ENCODE measurements at regions of chr19 and their contacts with region 1.

Region 1: DNA sequence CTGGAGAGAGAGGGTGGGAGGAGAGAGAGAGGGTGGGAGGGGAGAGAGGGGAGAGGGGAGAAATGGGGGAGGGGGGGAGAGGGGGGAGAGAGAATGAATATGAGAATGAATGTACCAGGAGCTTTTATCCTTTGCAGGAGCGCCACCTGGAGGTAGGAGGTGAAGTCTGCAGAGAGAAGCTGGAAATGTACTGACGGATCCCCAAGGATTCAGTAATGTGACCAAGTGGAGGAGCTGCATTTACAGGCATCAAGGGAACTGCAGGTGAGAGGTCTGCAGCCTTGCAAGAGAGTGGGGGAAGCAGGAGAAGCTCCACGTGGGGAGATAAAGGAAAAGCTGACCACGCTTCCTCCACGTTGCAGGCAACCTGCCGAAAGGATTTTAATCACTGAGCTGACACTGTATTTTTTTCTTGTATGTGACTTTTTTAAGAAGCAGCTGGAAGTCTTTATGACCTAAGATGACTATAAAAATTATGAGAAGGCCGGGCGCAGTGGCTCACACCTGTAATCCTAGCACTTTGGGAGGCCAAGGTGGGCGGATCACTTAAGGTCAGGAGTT is 33.7 kb downstream of the VSTM1 start:
- DNase-seq: peak in 5 of 6 donors; percentile 10 to 60 (median 45)
- ATAC-seq: peak in 3 of 4 donors; percentile 63 to 74 (median 74)
- H3K4me3 ChIP-seq: no peak overlapping the region
- H3K27ac ChIP-seq: no peak overlapping the region
- H3K4me1 ChIP-seq: no peaks in the 10 kb centered on the region
- H3K27me3 ChIP-seq: no peaks in the 10 kb centered on the region
- CTCF ChIP-seq: peak in 3 of 4 donors; percentile 23 to 33 (median 33)

Region 2: GRCh38 chr19:53730390-53730789 is 299.6 kb before region 1 on chr19:
- intact Hi-C with region 1: no loop called
- DNase-seq: no peak
- ATAC-seq: no peak
- H3K4me3 ChIP-seq: no peak overlapping the region
- H3K27ac ChIP-seq: no peak overlapping the region
- H3K4me1 ChIP-seq: no peaks in the 10 kb centered on the region
- H3K27me3 ChIP-seq: no peaks in the 10 kb centered on the region
- CTCF ChIP-seq: no peak

Region 3: GRCh38 chr19:53808710-53809125 is 221.3 kb before region 1 on chr19:
- intact Hi-C with region 1: loop called in 1 of 3 experiments (anchors 10 kb)
- DNase-seq: no peak
- ATAC-seq: peak in 3 of 4 donors; percentile 39 to 60 (median 59)
- H3K4me3 ChIP-seq: no peak overlapping the region
- H3K27ac ChIP-seq: no peak overlapping the region
- H3K4me1 ChIP-seq: no peaks in the 10 kb centered on the region
- H3K27me3 ChIP-seq: no peaks in the 10 kb centered on the region
- CTCF ChIP-seq: peak in 3 of 4 donors; percentile 16 to 27 (median 18)

Region 4: GRCh38 chr19:54137086-54137921 is 107.3 kb after region 1 on chr19 and contains the start of gene CNOT3:
- intact Hi-C with region 1: no loop called
- DNase-seq: peak; percentile 94 to 100 (median 100)
- ATAC-seq: peak; percentile 83 to 92 (median 86)
- H3K4me3 ChIP-seq: peak within 1 kb of the TSS; percentile 98 to 100 (median 100)
- H3K27ac ChIP-seq: peak within 1 kb of the TSS; percentile 82 to 92 (median 90)
- H3K4me1 ChIP-seq: peaks cover 0 to 20% (median 3%) of the 10 kb centered on the region in 3 donors
- H3K27me3 ChIP-seq: no peaks in the 10 kb centered on the region
- CTCF ChIP-seq: no peak
- total RNA-seq, gene CNOT3: 16.8 to 28.5 (median 21.3) TPM

Measured in pancreas (tissue), 10 donors.